ENCODE measurements at regions of chr6 and their contacts with region 1.

Region 1: GRCh38 chr6:143842902-143843676 is at the start of gene LTV1:
- DNase-seq: peak; percentile 96 to 97
- ATAC-seq: peak; percentile 99 to 100 (median 100)
- H3K4me3 ChIP-seq: peak within 1 kb of the TSS; percentile 56 to 94 (median 78)
- H3K27ac ChIP-seq: peak within 1 kb of the TSS; percentile 7 to 98 (median 92)
- H3K4me1 ChIP-seq: peaks cover 0 to 19% (median 13%) of the 10 kb centered on the region in 9 donors
- H3K27me3 ChIP-seq: no peaks in the 10 kb centered on the region
- CTCF ChIP-seq: peak in 4 of 9 donors; percentile 9 to 24 (median 19)
- total RNA-seq, gene LTV1: 6.9 to 19.4 (median 12.5) TPM

Region 2: GRCh38 chr6:143575440-143575839 is 267.6 kb before region 1 on chr6:
- intact Hi-C with region 1: loop called in 8 of 10 experiments (anchors 1 to 10 kb)
- DNase-seq: peak in 1 of 2 donors; percentile 67
- ATAC-seq: peak; percentile 70 to 92 (median 88)
- H3K4me3 ChIP-seq: no peak overlapping the region
- H3K27ac ChIP-seq: peak overlapping the region in 4 of 10 donors; percentile 18 to 59 (median 38)
- H3K4me1 ChIP-seq: peaks cover 0 to 16% (median 0%) of the 10 kb centered on the region in 9 donors
- H3K27me3 ChIP-seq: no peaks in the 10 kb centered on the region
- CTCF ChIP-seq: peak; percentile 74 to 97 (median 91)

Region 3: DNA sequence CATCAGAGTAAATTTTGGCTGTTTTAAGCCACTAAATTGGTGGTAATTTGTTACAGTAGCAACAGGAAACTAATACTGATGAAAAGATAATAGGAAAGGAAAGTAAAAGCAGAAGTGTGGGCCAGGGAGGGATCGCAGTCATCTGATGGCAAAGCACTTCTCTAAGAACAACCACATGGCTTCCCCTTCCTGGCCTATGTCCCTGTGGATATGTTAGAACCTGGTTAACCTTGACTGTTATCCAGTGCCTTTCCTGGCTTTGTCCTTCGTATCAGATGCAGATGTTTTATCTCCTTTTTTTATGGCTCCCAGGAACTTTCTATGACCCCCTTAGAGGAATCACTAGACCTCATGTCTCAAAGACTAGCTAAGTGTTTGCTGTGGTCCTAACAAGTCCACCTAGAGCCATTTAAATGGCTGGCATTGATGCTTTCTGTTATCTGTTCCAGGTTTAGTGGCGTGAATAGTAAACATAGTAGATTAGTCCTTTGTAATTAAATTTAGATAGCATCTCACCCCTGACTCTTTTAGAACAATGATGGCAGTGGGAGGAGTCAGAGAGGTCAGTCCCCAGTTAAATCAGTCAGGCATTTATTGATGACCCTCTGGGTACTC is 244.5 kb before region 1 on chr6:
- intact Hi-C with region 1: loop called in 2 of 10 experiments (anchors 5 to 10 kb)
- DNase-seq: peak in 1 of 2 donors; percentile 18
- ATAC-seq: peak in 7 of 8 donors; percentile 57 to 88 (median 76)
- H3K4me3 ChIP-seq: no peak overlapping the region
- H3K27ac ChIP-seq: peak overlapping the region in 7 of 10 donors; percentile 0 to 73 (median 37)
- H3K4me1 ChIP-seq: peaks cover 7 to 51% (median 37%) of the 10 kb centered on the region in 9 donors
- H3K27me3 ChIP-seq: no peaks in the 10 kb centered on the region
- CTCF ChIP-seq: no peak

Region 4: GRCh38 chr6:143689848-143690247 is 153.2 kb before region 1 on chr6:
- intact Hi-C with region 1: loop called in 1 of 10 experiments (anchors 10 kb)
- DNase-seq: no peak
- ATAC-seq: no peak
- H3K4me3 ChIP-seq: no peak overlapping the region
- H3K27ac ChIP-seq: peak overlapping the region in 1 of 10 donors; percentile 76
- H3K4me1 ChIP-seq: peaks cover 3 to 87% (median 69%) of the 10 kb centered on the region in 9 donors
- H3K27me3 ChIP-seq: no peaks in the 10 kb centered on the region
- CTCF ChIP-seq: no peak

Region 5: GRCh38 chr6:144008120-144008811 is 165.2 kb after region 1 on chr6 and contains the start of gene PLAGL1:
- intact Hi-C with region 1: loop called in 3 of 10 experiments (anchors 5 to 10 kb)
- DNase-seq: peak; percentile 59 to 77
- ATAC-seq: peak; percentile 89 to 98 (median 96)
- H3K4me3 ChIP-seq: peak within 1 kb of the TSS; percentile 37 to 67 (median 62)
- H3K27ac ChIP-seq: peak within 1 kb of the TSS; percentile 48 to 80 (median 74)
- H3K4me1 ChIP-seq: peaks cover 0 to 8% (median 0%) of the 10 kb centered on the region in 9 donors
- H3K27me3 ChIP-seq: no peaks in the 10 kb centered on the region
- CTCF ChIP-seq: no peak
- total RNA-seq, gene PLAGL1: 9.0 to 24.6 (median 12.5) TPM

Region 6: DNA sequence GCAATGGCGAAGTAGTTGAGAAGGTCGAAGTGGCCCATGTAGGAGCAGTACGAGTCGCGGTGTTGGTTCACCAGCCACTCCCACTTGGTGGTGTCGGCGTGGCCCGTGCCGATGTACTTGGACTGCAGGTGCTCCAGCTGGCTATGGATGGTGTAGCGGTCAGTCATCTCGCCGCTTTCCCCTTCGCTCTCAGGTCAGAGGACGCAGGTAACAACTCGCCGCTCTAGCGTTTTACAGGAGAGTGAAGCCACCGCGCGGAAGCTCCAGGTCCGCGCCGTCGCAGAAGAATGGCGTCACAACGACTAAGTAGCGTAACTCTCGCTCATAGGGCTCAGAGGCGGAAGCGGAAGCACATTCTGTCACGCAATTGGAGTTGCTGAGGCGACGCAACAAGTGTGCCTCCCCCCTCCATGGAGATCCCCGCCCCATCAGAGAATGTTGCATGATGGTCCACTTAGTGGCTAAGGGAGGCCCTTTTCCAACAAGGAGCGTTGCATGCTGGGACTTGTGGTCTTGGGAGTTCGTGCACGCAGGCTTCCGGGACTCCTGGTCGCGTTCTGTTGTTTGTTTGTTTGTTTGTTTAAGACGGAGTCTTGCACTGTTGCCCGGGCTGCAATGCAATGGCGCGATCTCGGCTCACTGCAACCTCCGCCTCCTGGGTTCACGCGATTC is 252.4 kb after region 1 on chr6 and contains the start of gene SF3B5:
- intact Hi-C with region 1: no loop called
- DNase-seq: peak; percentile 96 to 99
- ATAC-seq: peak; percentile 99 to 100 (median 100)
- H3K4me3 ChIP-seq: peak within 1 kb of the TSS; percentile 48 to 98 (median 84)
- H3K27ac ChIP-seq: peak within 1 kb of the TSS; percentile 59 to 92 (median 86)
- H3K4me1 ChIP-seq: peaks cover 6 to 27% (median 17%) of the 10 kb centered on the region in 9 donors
- H3K27me3 ChIP-seq: no peaks in the 10 kb centered on the region
- CTCF ChIP-seq: peak in 1 of 9 donors; percentile 12
- total RNA-seq, gene SF3B5: 107 to 158 (median 120) TPM